Caco-2 (cell line): ENCODE measurements at regions of chr7 and their contacts with region 1.

Region 1: DNA sequence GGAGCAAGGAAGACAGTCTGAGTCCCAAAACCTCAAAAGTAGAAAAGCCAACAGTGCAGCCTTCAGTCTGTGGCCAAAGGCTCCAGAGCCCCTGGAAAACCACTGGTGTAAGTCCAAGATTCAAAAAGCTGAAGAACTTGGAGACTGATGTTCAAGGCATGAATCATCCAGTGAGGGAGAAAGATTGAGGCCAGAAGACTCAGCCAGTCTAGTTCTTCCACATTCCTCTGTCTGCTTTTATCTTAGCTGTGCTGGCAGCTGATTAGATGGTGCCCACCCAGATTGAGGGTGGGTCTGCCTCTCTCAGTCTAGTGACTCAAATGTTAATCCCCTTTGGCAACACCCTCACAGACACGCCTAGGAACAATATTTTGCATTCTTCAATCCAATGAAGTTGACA is 20.1 kb upstream of the MDFIC start:
- DNase-seq: peak; percentile 53 to 72
- H3K4me3 ChIP-seq: no peak overlapping the region
- H3K4me3 Mint-ChIP-seq: peak overlapping the region; percentile 63
- H3K27ac Mint-ChIP-seq: peak overlapping the region; percentile 66
- H3K4me1 ChIP-seq: peaks cover 28% of the 10 kb centered on the region
- H3K4me1 Mint-ChIP-seq: peaks cover 24% of the 10 kb centered on the region
- H3K27me3 ChIP-seq: no peaks in the 10 kb centered on the region
- H3K27me3 Mint-ChIP-seq: no peaks in the 10 kb centered on the region
- CTCF ChIP-seq: no peak

Region 2: GRCh38 chr7:114922016-114922651 is 20.4 kb after region 1 on chr7 and contains the start of gene MDFIC:
- CTCF ChIA-PET with region 1: no interaction called
- POLR2A ChIA-PET with region 1: interaction called, 8 read pairs
- intact Hi-C with region 1: loop called (anchors 1 kb)
- DNase-seq: peak in 1 of 2 experiments; percentile 51
- H3K4me3 ChIP-seq: peak within 1 kb of the TSS; percentile 47
- H3K4me3 Mint-ChIP-seq: peak within 1 kb of the TSS; percentile 85
- H3K27ac Mint-ChIP-seq: peak within 1 kb of the TSS; percentile 39
- H3K4me1 ChIP-seq: no peaks in the 10 kb centered on the region
- H3K4me1 Mint-ChIP-seq: peaks cover 3% of the 10 kb centered on the region
- H3K27me3 ChIP-seq: no peaks in the 10 kb centered on the region
- H3K27me3 Mint-ChIP-seq: no peaks in the 10 kb centered on the region
- CTCF ChIP-seq: no peak
- total RNA-seq, gene MDFIC: 2.7 and 4.2 TPM in 2 replicates

Region 3: GRCh38 chr7:115015619-115016018 is 113.8 kb after region 1 on chr7:
- CTCF ChIA-PET with region 1: no interaction called
- POLR2A ChIA-PET with region 1: no interaction called
- intact Hi-C with region 1: no loop called
- DNase-seq: no peak
- H3K4me3 ChIP-seq: no peak overlapping the region
- H3K4me3 Mint-ChIP-seq: no peak overlapping the region
- H3K27ac Mint-ChIP-seq: no peak overlapping the region
- H3K4me1 ChIP-seq: no peaks in the 10 kb centered on the region
- H3K4me1 Mint-ChIP-seq: no peaks in the 10 kb centered on the region
- H3K27me3 ChIP-seq: no peaks in the 10 kb centered on the region
- H3K27me3 Mint-ChIP-seq: no peaks in the 10 kb centered on the region
- CTCF ChIP-seq: no peak